Sigmoid colon (tissue), 7 donors: ENCODE measurements at regions of chr2 and their contacts with region 1.

Region 1: GRCh38 chr2:221943076-221943810 is 355.6 kb downstream of the PAX3 start:
- DNase-seq: peak; percentile 94
- H3K4me3 ChIP-seq: no peak overlapping the region
- H3K27ac ChIP-seq: peak overlapping the region; percentile 75 to 80 (median 75)
- H3K4me1 ChIP-seq: peaks cover 0 to 43% (median 38%) of the 10 kb centered on the region in 4 donors
- H3K27me3 ChIP-seq: no peaks in the 10 kb centered on the region
- CTCF ChIP-seq: no peak
- EP300 ChIP-seq: peak; percentile 69 to 96 (median 91)
- POLR2A ChIP-seq: no peak

Region 2: GRCh38 chr2:221710744-221711143 is 232.5 kb before region 1 on chr2:
- intact Hi-C with region 1: loop called (anchors 5 kb)
- DNase-seq: peak; percentile 59
- H3K4me3 ChIP-seq: peak overlapping the region in 1 of 4 donors; percentile 6
- H3K27ac ChIP-seq: peak overlapping the region in 3 of 4 donors; percentile 55 to 70 (median 67)
- H3K4me1 ChIP-seq: peaks cover 0 to 34% (median 26%) of the 10 kb centered on the region in 4 donors
- H3K27me3 ChIP-seq: no peaks in the 10 kb centered on the region
- CTCF ChIP-seq: no peak
- EP300 ChIP-seq: no peak
- POLR2A ChIP-seq: no peak

Region 3: DNA sequence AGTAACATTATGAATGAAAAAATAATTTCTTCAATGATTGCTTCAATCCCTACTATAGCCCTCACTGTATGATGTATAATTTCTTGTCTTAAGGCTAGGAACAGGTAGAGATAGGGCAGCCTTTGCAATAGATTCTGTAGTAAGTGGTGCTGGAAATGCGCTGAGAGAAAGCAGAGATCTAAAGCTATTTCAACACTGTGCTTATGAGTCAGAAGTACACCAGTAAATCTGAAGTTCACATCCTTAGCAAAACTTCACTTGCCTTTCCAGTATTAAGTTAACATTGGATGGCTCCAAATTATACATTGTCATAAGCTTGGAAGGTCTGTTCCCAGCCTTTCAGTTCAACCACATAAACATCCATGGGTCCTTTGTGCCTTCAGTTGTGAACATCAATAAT is 192.9 kb before region 1 on chr2:
- intact Hi-C with region 1: loop called (anchors 5 kb)
- DNase-seq: no peak
- H3K4me3 ChIP-seq: no peak overlapping the region
- H3K27ac ChIP-seq: peak overlapping the region in 3 of 4 donors; percentile 42 to 60 (median 51)
- H3K4me1 ChIP-seq: peaks cover 0 to 13% (median 5%) of the 10 kb centered on the region in 4 donors
- H3K27me3 ChIP-seq: no peaks in the 10 kb centered on the region
- CTCF ChIP-seq: no peak
- EP300 ChIP-seq: no peak
- POLR2A ChIP-seq: no peak

Region 4: GRCh38 chr2:221836095-221836494 is 107.1 kb before region 1 on chr2:
- intact Hi-C with region 1: loop called (anchors 5 kb)
- DNase-seq: no peak
- H3K4me3 ChIP-seq: no peak overlapping the region
- H3K27ac ChIP-seq: peak overlapping the region in 1 of 4 donors; percentile 24
- H3K4me1 ChIP-seq: peaks cover 0 to 27% (median 15%) of the 10 kb centered on the region in 4 donors
- H3K27me3 ChIP-seq: no peaks in the 10 kb centered on the region
- CTCF ChIP-seq: no peak
- EP300 ChIP-seq: no peak
- POLR2A ChIP-seq: no peak